ENCODE measurements at regions of chr14 and their contacts with region 1.

Region 1: DNA sequence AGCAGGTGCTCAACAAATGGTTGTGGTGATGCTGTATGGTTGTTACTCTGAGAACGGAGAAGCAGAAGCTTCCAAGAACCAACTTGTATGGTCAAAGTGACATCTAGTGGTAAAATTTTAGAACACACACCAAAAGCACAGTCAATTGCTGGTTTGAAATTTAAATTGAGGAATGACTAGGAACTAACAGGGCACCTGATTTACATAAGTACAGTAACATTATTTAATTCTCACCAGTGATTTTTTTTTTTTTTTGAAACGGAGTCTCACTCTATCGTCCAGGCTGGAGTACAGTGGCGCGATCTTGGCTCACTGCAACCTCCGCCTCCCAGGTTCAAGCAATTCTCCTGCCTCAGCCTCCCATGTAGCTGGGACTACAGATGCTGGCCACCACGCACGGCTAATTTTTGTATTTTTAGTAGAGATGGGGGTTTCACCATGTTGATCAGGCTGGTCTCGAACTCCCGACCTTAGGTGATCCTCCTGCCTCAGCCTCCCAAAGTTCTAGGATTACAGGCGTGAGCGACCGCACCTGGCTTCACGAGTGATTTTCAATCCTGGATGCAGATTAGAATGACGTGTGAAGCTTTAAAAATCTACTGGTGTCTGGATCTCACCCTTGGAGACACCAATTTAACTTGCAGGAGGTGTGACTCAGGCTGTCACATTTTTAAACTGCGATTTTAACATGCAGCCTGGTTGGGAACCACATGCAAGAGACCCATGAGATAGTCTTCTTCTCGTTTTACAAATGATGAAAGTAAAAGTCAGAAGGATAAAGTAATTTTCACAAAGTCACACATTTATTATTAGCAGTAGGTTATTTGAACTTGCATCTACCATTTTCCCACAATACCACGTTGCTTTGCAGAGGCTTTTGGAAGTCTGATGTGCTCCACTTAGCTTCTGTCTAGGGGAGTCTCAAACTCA is 14.1 kb upstream of the NUMB start:
- DNase-seq: peak in 2 of 5 donors; percentile 40 to 53
- H3K4me3 ChIP-seq: no peak overlapping the region
- H3K4me3 Mint-ChIP-seq: no peak overlapping the region
- H3K27ac ChIP-seq: no peak overlapping the region
- H3K27ac Mint-ChIP-seq: no peak overlapping the region
- H3K4me1 ChIP-seq: no peaks in the 10 kb centered on the region
- H3K4me1 Mint-ChIP-seq: peaks cover 0 to 3% (median 0%) of the 10 kb centered on the region in 3 donors
- H3K27me3 ChIP-seq: no peaks in the 10 kb centered on the region
- H3K27me3 Mint-ChIP-seq: peaks cover 0 to 4% of the 10 kb centered on the region in 2 donors

Region 2: GRCh38 chr14:73173092-73173735 is 299.2 kb before region 1 on chr14:
- CTCF ChIA-PET with region 1: interaction called, 11 read pairs
- POLR2A ChIA-PET with region 1: no interaction called
- DNase-seq: peak in 2 of 5 donors; percentile 5
- H3K4me3 ChIP-seq: no peak overlapping the region
- H3K4me3 Mint-ChIP-seq: no peak overlapping the region
- H3K27ac ChIP-seq: no peak overlapping the region
- H3K27ac Mint-ChIP-seq: peak overlapping the region in 4 of 8 donors; percentile 4 to 49 (median 26)
- H3K4me1 ChIP-seq: no peaks in the 10 kb centered on the region
- H3K4me1 Mint-ChIP-seq: peaks cover 0 to 6% (median 3%) of the 10 kb centered on the region in 3 donors
- H3K27me3 ChIP-seq: no peaks in the 10 kb centered on the region
- H3K27me3 Mint-ChIP-seq: no peaks in the 10 kb centered on the region

Region 3: DNA sequence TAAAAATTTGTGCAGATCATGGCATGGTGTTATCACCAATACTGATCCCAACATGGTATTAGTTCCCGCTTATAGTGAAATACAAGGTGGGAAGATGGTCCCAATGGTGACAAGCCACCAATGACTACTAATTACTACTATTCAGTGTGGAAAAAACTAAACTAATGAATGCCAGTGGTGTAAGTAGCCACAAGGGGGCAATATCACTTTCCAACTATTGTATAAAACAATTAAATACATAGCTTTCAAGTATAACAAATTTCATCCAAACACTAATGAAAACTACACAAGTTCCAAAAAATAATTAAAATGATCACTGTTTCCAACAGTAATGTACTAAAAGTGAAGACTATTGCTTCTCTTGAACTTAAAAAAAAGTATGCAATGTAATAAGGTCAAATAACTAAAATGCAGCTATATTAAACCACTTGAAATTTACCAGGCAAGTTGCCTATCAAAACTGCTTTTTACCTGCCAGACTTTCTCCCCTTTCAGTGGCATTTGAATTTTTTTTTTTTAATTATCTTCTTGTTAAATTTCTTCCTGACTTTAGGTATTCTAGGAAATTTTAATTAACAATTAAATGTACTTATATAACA is 177.2 kb before region 1 on chr14:
- CTCF ChIA-PET with region 1: interaction called, 51 read pairs
- POLR2A ChIA-PET with region 1: interaction called, 4 read pairs
- DNase-seq: peak in 2 of 5 donors; percentile 24 to 27
- H3K4me3 ChIP-seq: no peak overlapping the region
- H3K4me3 Mint-ChIP-seq: no peak overlapping the region
- H3K27ac ChIP-seq: no peak overlapping the region
- H3K27ac Mint-ChIP-seq: no peak overlapping the region
- H3K4me1 ChIP-seq: no peaks in the 10 kb centered on the region
- H3K4me1 Mint-ChIP-seq: peaks cover 2 to 3% (median 2%) of the 10 kb centered on the region in 3 donors
- H3K27me3 ChIP-seq: no peaks in the 10 kb centered on the region
- H3K27me3 Mint-ChIP-seq: no peaks in the 10 kb centered on the region

Region 4: DNA sequence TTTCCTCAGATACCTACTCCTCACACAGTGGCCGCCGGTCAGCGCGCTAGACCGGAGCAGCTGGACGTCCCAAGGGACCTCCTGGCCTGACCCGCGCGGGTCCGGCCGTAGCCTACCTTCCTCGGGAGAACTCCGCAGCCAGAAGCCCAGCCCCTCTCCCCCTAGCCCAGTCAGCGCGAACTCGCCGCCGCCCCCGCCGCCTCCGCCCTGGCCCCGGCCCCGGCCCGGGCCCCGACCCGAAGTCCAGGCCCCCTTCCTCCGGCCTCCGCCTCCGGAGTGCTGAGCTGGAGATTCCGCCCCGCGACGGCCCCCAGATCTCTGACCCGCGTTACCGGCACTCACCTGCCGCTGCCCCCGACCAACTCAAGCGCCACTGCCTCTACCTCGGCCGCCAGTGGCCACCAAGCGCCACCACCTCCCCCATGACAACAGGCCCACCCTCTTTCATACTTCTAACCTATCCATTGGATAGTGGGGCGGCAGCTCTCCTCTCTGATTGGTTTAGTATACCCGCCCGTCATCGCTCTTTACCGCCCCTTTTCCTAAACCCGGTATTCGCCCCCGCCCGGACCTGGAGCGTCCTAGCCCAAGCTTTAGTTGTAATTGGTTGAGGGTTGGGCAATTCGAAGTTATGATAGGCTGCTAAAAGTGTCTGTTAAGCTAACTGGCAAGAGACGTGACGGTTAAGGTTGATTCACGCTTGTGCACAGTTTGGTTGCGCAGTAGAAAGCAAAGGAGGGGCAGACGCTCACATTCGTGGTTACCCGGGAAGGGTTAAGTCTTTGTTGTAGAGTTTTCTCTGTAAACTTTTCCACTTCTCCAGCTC is 14.1 kb before region 1 on chr14 and contains the start of gene NUMB:
- CTCF ChIA-PET with region 1: interaction called, 15 read pairs
- POLR2A ChIA-PET with region 1: no interaction called
- DNase-seq: peak; percentile 92 to 98 (median 98)
- H3K4me3 ChIP-seq: peak within 1 kb of the TSS; percentile 72
- H3K4me3 Mint-ChIP-seq: peak within 1 kb of the TSS; percentile 89 to 100 (median 97)
- H3K27ac ChIP-seq: peak within 1 kb of the TSS; percentile 71
- H3K27ac Mint-ChIP-seq: peak within 1 kb of the TSS; percentile 72 to 99 (median 96)
- H3K4me1 ChIP-seq: peaks cover 26% of the 10 kb centered on the region
- H3K4me1 Mint-ChIP-seq: peaks cover 35 to 51% (median 47%) of the 10 kb centered on the region in 3 donors
- H3K27me3 ChIP-seq: no peaks in the 10 kb centered on the region
- H3K27me3 Mint-ChIP-seq: no peaks in the 10 kb centered on the region
- total RNA-seq, gene NUMB: 36.5 to 38.5 TPM